Posterior cingulate gyrus (tissue), 11 donors: ENCODE measurements at regions of chr13 and their contacts with region 1.

Region 1: GRCh38 chr13:81017513-81018152 is 676.7 kb upstream of the SPRY2 start:
- DNase-seq: no peak

Region 2: GRCh38 chr13:80979035-80979641 is 38.5 kb before region 1 on chr13:
- intact Hi-C with region 1: loop called (anchors 2 kb)
- DNase-seq: peak in 6 of 10 donors; percentile 12 to 87 (median 54)

Region 3: DNA sequence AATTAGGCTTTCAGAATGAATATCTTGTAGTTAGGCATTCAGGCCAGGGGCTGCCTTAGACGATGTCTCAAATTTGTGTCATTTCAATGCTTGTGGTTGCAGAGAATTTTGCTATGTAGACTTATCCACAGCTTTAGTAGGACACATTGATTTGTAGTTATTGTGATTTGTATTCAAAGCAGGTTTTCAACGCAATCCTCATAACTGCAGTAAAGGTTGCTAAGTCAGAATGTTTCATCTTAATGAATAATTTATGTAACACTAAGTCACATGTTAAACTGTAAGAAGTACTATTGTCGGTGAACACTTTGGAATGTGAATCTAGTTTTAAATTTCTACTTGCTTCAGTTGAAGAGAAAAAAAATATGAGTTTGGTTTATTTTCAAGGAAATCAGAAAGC is 440.5 kb after region 1 on chr13:
- intact Hi-C with region 1: no loop called
- DNase-seq: no peak